Transverse colon (tissue), 4 donors: ENCODE measurements at regions of chr3 and their contacts with region 1.

Region 1: DNA sequence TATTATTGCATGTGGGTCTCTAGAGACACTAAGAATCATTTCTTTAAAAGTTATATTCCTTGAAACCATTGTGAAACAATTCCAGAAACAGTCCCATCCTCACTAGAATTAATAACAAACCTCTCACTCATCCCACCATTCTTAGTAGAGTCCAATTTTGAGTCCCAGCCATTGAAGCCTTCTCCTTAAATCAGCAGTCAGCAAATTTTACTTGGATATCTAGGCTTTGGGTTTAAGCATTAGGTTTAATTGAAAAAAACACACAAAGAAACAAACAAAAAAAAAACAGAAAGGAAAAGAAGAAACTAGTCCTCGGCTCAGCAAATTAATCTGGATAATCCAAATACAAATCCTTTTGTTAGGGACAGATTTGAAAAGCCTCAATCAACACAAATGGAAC is 109.3 kb downstream of the LRRC3B start:
- DNase-seq: no peak
- H3K4me3 ChIP-seq: no peak overlapping the region
- H3K27ac ChIP-seq: no peak overlapping the region
- H3K4me1 ChIP-seq: no peaks in the 10 kb centered on the region
- H3K27me3 ChIP-seq: no peaks in the 10 kb centered on the region
- CTCF ChIP-seq: no peak
- EP300 ChIP-seq: no peak
- POLR2A ChIP-seq: no peak

Region 2: GRCh38 chr3:26753095-26753494 is 21.3 kb after region 1 on chr3:
- in situ Hi-C with region 1: no loop called
- intact Hi-C with region 1: loop called (anchors 1 kb)
- DNase-seq: no peak
- H3K4me3 ChIP-seq: no peak overlapping the region
- H3K27ac ChIP-seq: no peak overlapping the region
- H3K4me1 ChIP-seq: no peaks in the 10 kb centered on the region
- H3K27me3 ChIP-seq: no peaks in the 10 kb centered on the region
- CTCF ChIP-seq: no peak
- EP300 ChIP-seq: no peak
- POLR2A ChIP-seq: no peak